ENCODE measurements at regions of chr2 and their contacts with region 1.

Region 1: GRCh38 chr2:64523666-64524603 is at the start of gene AFTPH:
- DNase-seq: peak; percentile 98 to 99
- H3K4me3 ChIP-seq: peak within 1 kb of the TSS; percentile 90 to 98
- H3K27ac ChIP-seq: peak within 1 kb of the TSS; percentile 96 to 97
- H3K4me1 ChIP-seq: peaks cover 0 to 29% (median 20%) of the 10 kb centered on the region in 4 donors
- H3K27me3 ChIP-seq: no peaks in the 10 kb centered on the region
- CTCF ChIP-seq: no peak

Region 2: DNA sequence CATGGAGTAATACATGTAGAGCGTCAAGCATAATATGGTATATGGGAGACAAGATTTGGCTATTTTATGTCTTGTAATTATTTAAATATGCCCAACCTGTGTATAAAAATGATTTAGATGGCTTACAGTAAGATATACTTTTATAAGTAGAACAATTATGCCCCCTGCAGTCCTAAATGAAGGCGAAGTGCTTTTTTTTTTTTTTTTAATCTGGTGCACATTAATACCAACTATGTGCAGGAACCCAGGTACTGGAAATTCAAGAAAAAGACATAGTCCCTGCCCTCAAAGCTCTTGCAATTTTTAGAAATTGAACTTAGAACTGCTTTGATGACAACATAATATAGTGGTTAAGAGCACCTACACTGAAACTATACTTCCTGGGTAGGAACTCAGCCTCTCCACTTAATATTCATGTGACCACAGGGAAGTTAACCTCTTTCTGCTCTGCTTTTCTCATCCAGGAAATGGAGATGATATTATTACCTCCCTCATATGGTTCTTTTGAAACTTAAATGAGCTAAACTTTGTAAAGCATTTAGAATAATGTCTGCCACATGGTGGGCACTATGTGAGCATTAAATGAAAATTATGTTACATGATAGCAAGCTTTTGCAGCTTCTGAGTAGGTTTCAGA is 38.3 kb after region 1 on chr2:
- intact Hi-C with region 1: loop called (anchors 5 kb)
- DNase-seq: no peak
- H3K4me3 ChIP-seq: no peak overlapping the region
- H3K27ac ChIP-seq: no peak overlapping the region
- H3K4me1 ChIP-seq: peaks cover 0 to 20% (median 3%) of the 10 kb centered on the region in 4 donors
- H3K27me3 ChIP-seq: no peaks in the 10 kb centered on the region
- CTCF ChIP-seq: peak; percentile 16 to 48